ENCODE measurements at regions of chr21 and their contacts with region 1.

Region 1: DNA sequence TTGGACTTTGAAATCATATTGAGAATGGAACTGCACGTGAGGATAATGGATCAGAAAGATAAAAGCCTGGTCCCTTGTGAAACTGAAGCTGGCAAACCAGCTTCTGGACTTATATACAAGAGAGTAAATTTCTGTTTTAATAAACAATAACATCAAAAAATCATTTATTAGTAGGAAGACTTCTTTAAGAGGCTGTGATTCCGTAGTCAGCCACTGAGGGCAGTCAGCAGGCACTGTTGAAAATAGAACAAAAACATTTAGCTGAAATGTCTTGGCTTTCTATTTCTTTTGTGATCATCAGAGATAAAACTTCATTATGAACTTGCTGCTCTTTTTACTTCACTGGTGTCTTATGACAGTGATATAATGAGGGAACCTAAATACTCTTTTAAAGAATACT is 489.4 kb downstream of the PCP4 start:
- DNase-seq: no peak
- ATAC-seq: no peak
- H3K4me3 Mint-ChIP-seq: no peak overlapping the region
- H3K27ac Mint-ChIP-seq: no peak overlapping the region
- H3K4me1 Mint-ChIP-seq: no peaks in the 10 kb centered on the region
- H3K27me3 Mint-ChIP-seq: no peaks in the 10 kb centered on the region
- CTCF ChIP-seq: no peak

Region 2: DNA sequence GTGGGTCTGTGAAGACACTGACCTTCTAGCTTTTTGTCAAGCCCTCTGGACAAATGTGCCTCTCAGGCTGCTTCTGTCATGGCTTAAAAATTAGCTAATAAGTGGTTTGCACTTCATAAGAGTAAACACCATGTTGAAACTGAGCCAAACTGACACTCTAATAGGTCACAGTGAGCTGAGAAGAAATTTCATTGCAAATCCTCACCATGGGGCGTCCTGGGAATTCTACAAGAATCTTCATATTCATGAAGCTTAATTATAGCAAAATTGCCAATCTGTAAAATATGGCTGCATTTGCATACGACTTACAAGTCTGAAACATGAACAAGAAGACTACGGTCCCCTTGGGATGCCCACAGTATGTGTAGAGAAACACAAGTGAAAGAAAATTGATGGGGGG is 301.7 kb after region 1 on chr21:
- CTCF ChIA-PET with region 1: no interaction called
- POLR2A ChIA-PET with region 1: interaction called, 10 read pairs
- DNase-seq: no peak
- ATAC-seq: no peak
- H3K4me3 Mint-ChIP-seq: no peak overlapping the region
- H3K27ac Mint-ChIP-seq: no peak overlapping the region
- H3K4me1 Mint-ChIP-seq: peaks cover 16% of the 10 kb centered on the region
- H3K27me3 Mint-ChIP-seq: no peaks in the 10 kb centered on the region
- CTCF ChIP-seq: no peak